CD8-positive, alpha-beta T cell (primary cell): ENCODE measurements at regions of chr16 and their contacts with region 1.

Region 1: GRCh38 chr16:88442727-88443576 is 10.1 kb upstream of the ZFPM1 start:
- DNase-seq: peak; percentile 66 to 91 (median 80)
- ATAC-seq: peak; percentile 89
- H3K4me3 ChIP-seq: no peak overlapping the region
- H3K4me3 Mint-ChIP-seq: no peak overlapping the region
- H3K27ac ChIP-seq: no peak overlapping the region
- H3K27ac Mint-ChIP-seq: no peak overlapping the region
- H3K4me1 ChIP-seq: peaks cover 8% of the 10 kb centered on the region
- H3K4me1 Mint-ChIP-seq: peaks cover 4% of the 10 kb centered on the region
- H3K27me3 ChIP-seq: no peaks in the 10 kb centered on the region
- H3K27me3 Mint-ChIP-seq: no peaks in the 10 kb centered on the region
- CTCF ChIP-seq: peak; percentile 92

Region 2: DNA sequence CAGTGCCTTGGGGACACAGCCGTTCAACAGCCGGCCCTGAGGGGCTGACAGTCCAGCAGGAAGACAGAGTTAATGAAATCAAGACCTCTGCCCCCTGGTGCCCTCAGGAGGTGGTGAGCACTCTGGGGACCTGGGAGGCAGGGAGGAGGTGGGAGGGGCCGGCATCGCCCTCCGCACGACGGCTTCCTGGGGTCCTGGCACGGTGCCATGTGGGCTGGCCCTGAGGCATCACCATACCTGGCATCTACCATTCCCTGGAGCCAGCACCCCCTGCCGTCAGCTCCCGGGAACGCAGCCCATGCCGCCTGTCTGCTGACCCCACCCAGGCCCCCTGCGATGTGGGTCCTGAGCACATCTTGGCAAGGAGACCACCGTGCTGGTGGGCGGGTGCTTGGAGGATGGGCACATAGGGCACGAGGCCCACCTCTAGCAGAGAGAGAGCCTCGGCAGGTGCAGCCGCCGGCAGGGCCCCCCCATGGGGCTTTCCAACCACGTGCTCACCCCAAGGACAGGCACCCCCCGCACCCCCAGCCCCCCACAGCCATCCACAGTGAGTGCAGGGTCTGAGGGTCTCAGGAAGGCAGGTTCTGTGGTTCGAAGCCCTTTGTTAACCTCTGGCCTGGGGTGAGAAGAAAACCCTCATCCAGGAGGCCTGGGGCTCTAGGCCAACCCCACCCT is 62.6 kb after region 1 on chr16:
- CTCF ChIA-PET with region 1: interaction called, 7 read pairs
- POLR2A ChIA-PET with region 1: no interaction called
- intact Hi-C with region 1: loop called (anchors 1 kb)
- DNase-seq: peak; percentile 48 to 87 (median 73)
- ATAC-seq: peak; percentile 81
- H3K4me3 ChIP-seq: no peak overlapping the region
- H3K4me3 Mint-ChIP-seq: no peak overlapping the region
- H3K27ac ChIP-seq: no peak overlapping the region
- H3K27ac Mint-ChIP-seq: no peak overlapping the region
- H3K4me1 ChIP-seq: peaks cover 14% of the 10 kb centered on the region
- H3K4me1 Mint-ChIP-seq: peaks cover 14% of the 10 kb centered on the region
- H3K27me3 ChIP-seq: no peaks in the 10 kb centered on the region
- H3K27me3 Mint-ChIP-seq: no peaks in the 10 kb centered on the region
- CTCF ChIP-seq: peak; percentile 35

Region 3: GRCh38 chr16:88527186-88527936 is 84.4 kb after region 1 on chr16:
- CTCF ChIA-PET with region 1: interaction called, 5 read pairs
- POLR2A ChIA-PET with region 1: no interaction called
- intact Hi-C with region 1: loop called in 1 of 2 experiments (anchors 1 kb)
- DNase-seq: peak; percentile 41 to 81 (median 60)
- ATAC-seq: peak; percentile 54
- H3K4me3 ChIP-seq: no peak overlapping the region
- H3K4me3 Mint-ChIP-seq: no peak overlapping the region
- H3K27ac ChIP-seq: no peak overlapping the region
- H3K27ac Mint-ChIP-seq: no peak overlapping the region
- H3K4me1 ChIP-seq: no peaks in the 10 kb centered on the region
- H3K4me1 Mint-ChIP-seq: peaks cover 6% of the 10 kb centered on the region
- H3K27me3 ChIP-seq: no peaks in the 10 kb centered on the region
- H3K27me3 Mint-ChIP-seq: no peaks in the 10 kb centered on the region
- CTCF ChIP-seq: peak; percentile 83